ENCODE measurements at regions of chr7 and their contacts with region 1.

Region 1: DNA sequence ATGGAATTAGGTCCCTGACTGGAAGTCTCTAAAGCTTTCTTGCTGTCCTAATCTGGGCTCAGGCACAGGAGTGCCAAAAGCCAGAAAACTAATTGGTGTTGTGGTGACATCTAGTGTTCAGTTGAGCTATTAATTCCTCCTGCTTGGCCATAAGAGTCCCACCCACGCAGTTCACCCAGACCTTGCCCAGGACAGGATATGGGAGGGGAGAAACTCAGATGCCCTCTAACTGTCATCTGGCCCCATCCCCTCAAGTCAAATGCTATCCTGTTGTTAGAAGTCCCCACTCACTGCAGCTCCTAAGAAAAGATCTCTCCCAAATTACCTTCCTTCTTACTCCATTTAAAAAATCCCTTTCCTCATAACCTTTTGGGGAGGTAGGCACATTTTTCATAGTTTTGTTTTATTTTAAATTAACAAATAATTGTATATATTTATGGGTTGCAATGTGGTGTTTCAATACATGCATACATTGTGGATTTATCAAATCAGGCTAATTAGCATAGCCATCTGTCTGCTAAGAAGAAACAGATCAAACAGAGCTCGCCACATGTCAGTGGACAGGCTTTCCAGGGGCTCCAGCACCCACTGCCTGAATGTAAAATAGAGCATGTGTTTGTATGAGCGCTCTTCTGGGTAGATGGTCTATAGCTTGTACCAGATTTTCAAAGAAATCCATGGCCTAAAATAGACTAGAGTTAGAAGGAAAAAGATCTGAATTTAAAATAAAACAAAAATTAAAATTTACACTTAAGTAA is 84.0 kb downstream of the GSAP start:
- DNase-seq: peak; percentile 76
- ATAC-seq: peak; percentile 56
- H3K4me3 Mint-ChIP-seq: no peak overlapping the region
- H3K27ac Mint-ChIP-seq: no peak overlapping the region
- H3K4me1 Mint-ChIP-seq: peaks cover 44% of the 10 kb centered on the region
- H3K27me3 Mint-ChIP-seq: no peaks in the 10 kb centered on the region

Region 2: DNA sequence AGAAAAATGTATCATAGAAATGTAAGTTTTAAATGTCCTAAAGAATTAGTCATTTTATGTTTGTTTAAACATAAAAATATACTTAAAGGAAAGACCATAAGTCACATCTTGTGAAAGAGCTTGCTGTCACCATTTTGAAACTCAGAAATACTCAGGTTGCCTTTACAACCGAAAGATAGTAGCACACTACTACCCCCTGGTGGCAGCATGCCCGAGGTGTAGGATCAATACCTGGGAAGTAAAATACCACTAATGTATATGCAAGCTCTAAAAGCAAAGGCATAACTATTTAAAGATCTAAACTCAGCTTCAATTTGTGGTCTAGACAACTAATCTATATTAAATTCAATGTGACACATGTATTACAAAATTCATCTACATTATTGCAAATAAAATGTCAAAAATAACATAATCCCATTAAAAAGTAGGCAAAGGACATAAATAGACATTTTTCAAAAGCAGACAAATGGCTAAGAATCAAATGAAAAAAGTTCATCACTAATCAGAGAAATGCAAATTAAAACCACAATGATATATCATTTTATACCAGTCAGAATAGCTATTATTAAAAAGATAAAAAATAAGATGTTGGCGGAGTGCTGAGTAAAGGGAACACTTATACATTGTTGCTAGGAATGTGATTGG is 84.8 kb before region 1 on chr7:
- CTCF ChIA-PET with region 1: interaction called, 21 read pairs
- POLR2A ChIA-PET with region 1: no interaction called
- intact Hi-C with region 1: loop called (anchors 1 to 5 kb)
- DNase-seq: peak; percentile 94
- ATAC-seq: peak; percentile 95
- H3K4me3 Mint-ChIP-seq: no peak overlapping the region
- H3K27ac Mint-ChIP-seq: no peak overlapping the region
- H3K4me1 Mint-ChIP-seq: no peaks in the 10 kb centered on the region
- H3K27me3 Mint-ChIP-seq: no peaks in the 10 kb centered on the region

Region 3: DNA sequence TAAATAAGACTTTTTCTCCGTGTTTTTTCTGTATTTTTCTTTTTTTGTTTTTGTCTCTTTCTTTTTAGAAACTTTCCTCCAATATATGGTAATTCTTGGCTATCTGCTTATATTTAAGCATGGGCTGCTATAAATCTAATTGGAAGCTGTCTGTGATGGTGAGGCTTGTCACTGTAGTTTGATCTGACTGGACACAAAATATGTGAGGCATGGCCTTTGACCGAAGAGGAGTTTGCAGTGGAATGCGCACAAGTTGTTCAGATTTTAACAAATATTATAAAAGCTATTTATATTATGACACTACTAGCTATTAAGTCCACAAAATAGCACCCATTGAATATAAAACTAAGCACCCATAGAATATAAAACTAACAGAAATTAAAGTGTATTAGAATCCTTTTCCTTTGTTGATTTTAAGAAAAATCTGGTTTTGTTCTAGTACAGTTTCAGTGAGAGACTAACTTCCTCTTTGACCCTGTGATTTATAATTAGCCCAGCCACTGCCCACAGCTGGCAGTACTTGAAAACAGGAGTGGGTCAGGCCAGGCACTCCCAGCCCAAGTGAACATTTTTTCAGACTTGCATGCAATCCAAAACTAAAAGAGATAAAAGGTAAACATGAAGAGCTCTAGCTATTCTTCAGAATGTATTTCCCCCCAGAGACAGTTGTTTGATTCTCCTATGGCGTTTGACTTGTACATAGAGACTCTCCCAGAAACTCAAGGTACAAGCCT is 62.6 kb before region 1 on chr7:
- CTCF ChIA-PET with region 1: interaction called, 3 read pairs
- POLR2A ChIA-PET with region 1: interaction called, 5 read pairs
- intact Hi-C with region 1: loop called (anchors 1 kb)
- DNase-seq: no peak
- ATAC-seq: no peak
- H3K4me3 Mint-ChIP-seq: no peak overlapping the region
- H3K27ac Mint-ChIP-seq: no peak overlapping the region
- H3K4me1 Mint-ChIP-seq: peaks cover 13% of the 10 kb centered on the region
- H3K27me3 Mint-ChIP-seq: no peaks in the 10 kb centered on the region

Region 4: DNA sequence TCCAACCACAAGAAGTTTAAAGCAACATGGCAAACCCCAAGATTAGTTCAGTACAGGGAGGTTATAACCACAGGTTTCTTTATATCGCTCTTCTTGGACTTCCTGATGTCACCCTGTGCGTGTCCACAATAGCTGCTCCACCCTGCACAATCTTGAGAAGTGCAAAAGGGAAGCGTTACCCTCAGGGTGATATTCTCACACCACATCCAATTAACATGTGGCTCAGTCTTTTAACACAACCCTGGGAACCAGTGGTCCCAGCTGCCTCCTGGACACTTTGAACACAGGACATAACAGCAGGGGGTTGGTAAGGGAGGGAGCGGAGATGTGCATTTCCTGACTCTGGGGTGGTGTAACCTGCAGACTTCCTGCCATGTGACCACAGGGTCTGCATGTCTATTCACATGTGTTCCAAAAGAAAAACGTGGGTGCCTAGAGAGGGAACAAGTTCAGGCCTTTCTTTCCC is 19.5 kb after region 1 on chr7:
- CTCF ChIA-PET with region 1: no interaction called
- POLR2A ChIA-PET with region 1: no interaction called
- intact Hi-C with region 1: loop called in 1 of 2 experiments (anchors 2 kb)
- DNase-seq: peak; percentile 55
- ATAC-seq: peak; percentile 83
- H3K4me3 Mint-ChIP-seq: peak overlapping the region; percentile 53
- H3K27ac Mint-ChIP-seq: peak overlapping the region; percentile 87
- H3K4me1 Mint-ChIP-seq: peaks cover 56% of the 10 kb centered on the region
- H3K27me3 Mint-ChIP-seq: no peaks in the 10 kb centered on the region

Region 5: GRCh38 chr7:77393269-77393668 is 61.2 kb after region 1 on chr7:
- CTCF ChIA-PET with region 1: no interaction called
- POLR2A ChIA-PET with region 1: no interaction called
- intact Hi-C with region 1: loop called in 1 of 2 experiments (anchors 2 kb)
- DNase-seq: peak; percentile 72
- ATAC-seq: peak; percentile 98
- H3K4me3 Mint-ChIP-seq: no peak overlapping the region
- H3K27ac Mint-ChIP-seq: no peak overlapping the region
- H3K4me1 Mint-ChIP-seq: peaks cover 26% of the 10 kb centered on the region
- H3K27me3 Mint-ChIP-seq: no peaks in the 10 kb centered on the region

Measured in activated CD4-positive, alpha-beta T cell treated with anti-CD3 and anti-CD28 coated beads for 36 hours (primary cell).